ENCODE measurements at regions of chr14 and their contacts with region 1.

Region 1: DNA sequence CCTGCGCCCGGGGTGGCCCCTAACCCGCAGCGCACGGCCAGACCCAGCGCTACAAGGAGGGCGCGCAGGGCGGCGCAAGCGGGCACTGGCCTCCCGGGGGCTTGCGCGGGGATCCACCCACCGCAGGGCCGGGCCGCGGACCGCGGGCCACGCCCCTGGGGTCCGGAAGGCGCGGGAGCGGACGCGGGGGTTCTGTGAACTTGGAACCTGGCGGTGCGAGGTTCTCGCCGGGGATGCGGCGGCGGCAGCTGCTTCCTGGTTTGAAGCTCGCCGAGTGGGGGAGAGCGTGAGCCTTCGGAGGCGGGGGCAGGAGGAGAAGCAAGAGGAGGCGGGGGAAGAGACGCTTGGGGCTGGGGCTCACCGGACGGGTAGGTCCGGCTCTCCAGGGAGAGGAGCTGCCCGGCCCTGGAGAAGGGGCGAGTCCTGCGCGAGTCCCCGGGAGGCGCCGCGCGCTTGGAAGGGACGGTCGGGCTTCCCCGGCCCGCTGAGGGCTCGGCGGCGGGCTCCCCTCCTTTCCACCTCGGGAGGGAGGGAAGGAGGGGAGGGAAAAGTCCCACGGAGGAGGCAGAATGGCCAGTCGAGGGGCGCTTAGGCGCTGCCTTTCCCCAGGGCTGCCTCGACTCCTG is at the start of gene PRKCH:
- DNase-seq: peak; percentile 87
- H3K4me3 Mint-ChIP-seq: peak within 1 kb of the TSS; percentile 87
- H3K27ac Mint-ChIP-seq: peak within 1 kb of the TSS; percentile 84
- H3K4me1 Mint-ChIP-seq: peaks cover 11% of the 10 kb centered on the region
- H3K27me3 Mint-ChIP-seq: no peaks in the 10 kb centered on the region
- CTCF ChIP-seq: no peak
- total RNA-seq, gene PRKCH: 18.5 and 22.3 TPM in 2 replicates

Region 2: DNA sequence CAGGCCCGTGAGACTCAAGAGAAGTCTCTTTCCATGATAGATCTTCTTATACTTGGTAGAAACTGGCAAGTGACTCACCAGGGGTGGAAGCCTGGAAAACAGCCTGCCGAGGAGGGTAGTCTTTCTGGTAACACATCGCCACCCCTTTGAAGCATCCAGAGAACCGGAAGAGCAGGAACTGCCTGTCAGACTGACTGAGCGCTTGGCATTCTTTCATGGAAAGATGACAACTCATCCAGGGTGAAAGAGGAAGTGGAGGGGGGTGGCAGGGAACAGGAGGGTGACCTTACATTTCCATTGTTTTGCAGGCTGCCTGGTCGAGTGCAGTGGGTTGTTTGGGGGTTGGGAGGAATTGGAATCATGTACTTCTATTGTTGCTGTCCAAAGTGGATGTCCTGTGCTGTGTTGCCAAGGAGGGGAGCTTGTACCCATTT is 34.4 kb after region 1 on chr14:
- CTCF ChIA-PET with region 1: no interaction called
- intact Hi-C with region 1: loop called (anchors 5 kb)
- DNase-seq: peak; percentile 85
- H3K4me3 Mint-ChIP-seq: peak overlapping the region; percentile 46
- H3K27ac Mint-ChIP-seq: peak overlapping the region; percentile 79
- H3K4me1 Mint-ChIP-seq: peaks cover 49% of the 10 kb centered on the region
- H3K27me3 Mint-ChIP-seq: no peaks in the 10 kb centered on the region
- CTCF ChIP-seq: no peak

Region 3: DNA sequence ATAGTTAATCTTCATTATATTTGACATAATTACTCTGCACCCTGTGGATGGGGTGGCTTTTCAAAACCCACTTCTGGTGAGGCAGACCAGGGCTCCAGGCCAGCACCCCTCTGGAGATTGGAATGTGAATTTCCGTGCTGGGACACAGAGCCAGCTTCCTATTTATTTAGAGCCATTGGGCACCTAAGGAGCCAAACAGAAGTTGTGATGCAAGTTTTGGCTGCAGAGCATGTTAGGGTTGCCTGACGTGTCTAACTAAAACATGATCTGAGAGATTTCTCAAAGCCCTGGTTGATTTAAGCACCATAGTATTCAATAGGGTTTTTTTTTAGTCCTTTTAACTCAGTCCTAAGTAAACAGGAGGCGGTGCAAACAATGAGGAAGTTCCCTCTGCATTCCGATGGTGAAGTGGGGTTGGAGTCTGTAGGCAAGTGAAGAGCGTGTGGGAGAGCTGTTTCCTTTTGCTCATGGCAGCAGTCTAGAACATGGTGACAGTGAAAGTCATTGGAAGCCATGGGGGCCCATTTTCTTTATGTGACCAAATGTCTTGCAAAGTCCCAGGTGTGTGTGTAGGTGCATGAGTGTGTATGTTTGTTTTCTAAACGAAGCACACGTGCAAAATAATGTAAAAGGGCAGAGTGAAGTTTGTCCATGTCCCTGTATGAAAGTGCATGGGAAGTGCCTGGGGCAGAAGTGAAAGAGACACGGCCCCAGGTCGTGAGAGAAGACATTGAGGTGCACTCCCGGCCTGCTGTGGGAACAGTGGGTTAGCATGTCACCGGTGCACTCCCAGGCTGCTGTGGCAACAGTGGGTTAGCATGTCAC is 117.6 kb after region 1 on chr14:
- CTCF ChIA-PET with region 1: interaction called, 4 read pairs
- intact Hi-C with region 1: loop called (anchors 10 kb)
- DNase-seq: peak; percentile 57
- H3K4me3 Mint-ChIP-seq: peak overlapping the region; percentile 62
- H3K27ac Mint-ChIP-seq: peak overlapping the region; percentile 29
- H3K4me1 Mint-ChIP-seq: peaks cover 15% of the 10 kb centered on the region
- H3K27me3 Mint-ChIP-seq: no peaks in the 10 kb centered on the region
- CTCF ChIP-seq: no peak